ENCODE measurements at regions of chr1 and their contacts with region 1.

Region 1: GRCh38 chr1:91165033-91165654 is 143.3 kb upstream of the ZNF644 start:
- DNase-seq: peak; percentile 76
- H3K4me3 Mint-ChIP-seq: no peak overlapping the region
- H3K27ac Mint-ChIP-seq: peak overlapping the region; percentile 43
- H3K4me1 Mint-ChIP-seq: no peaks in the 10 kb centered on the region
- H3K27me3 Mint-ChIP-seq: no peaks in the 10 kb centered on the region
- CTCF ChIP-seq: peak; percentile 82

Region 2: DNA sequence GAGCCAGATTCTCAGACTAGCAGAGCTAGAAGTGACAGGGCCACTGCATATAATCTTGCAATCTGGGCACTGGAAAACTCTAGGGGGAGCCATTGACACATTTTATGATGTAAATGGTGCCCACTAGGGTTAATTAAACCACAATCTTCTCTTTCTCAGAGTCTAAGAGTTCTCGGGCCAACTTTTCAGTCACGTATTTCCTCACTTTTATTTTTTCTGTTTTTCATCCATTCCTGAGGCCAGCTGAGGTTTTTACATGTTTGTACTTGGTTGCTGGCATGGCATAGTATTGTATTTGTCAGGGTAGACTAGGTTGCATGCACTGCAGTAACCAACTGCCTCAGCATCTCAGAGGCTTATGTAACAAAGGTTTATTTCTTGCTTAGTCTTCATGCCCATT is 1032.0 kb before region 1 on chr1:
- CTCF ChIA-PET with region 1: interaction called, 28 read pairs
- POLR2A ChIA-PET with region 1: no interaction called
- intact Hi-C with region 1: loop called (anchors 1 kb)
- DNase-seq: peak; percentile 77
- H3K4me3 Mint-ChIP-seq: no peak overlapping the region
- H3K27ac Mint-ChIP-seq: no peak overlapping the region
- H3K4me1 Mint-ChIP-seq: no peaks in the 10 kb centered on the region
- H3K27me3 Mint-ChIP-seq: peaks cover 18% of the 10 kb centered on the region
- CTCF ChIP-seq: peak; percentile 74

Region 3: DNA sequence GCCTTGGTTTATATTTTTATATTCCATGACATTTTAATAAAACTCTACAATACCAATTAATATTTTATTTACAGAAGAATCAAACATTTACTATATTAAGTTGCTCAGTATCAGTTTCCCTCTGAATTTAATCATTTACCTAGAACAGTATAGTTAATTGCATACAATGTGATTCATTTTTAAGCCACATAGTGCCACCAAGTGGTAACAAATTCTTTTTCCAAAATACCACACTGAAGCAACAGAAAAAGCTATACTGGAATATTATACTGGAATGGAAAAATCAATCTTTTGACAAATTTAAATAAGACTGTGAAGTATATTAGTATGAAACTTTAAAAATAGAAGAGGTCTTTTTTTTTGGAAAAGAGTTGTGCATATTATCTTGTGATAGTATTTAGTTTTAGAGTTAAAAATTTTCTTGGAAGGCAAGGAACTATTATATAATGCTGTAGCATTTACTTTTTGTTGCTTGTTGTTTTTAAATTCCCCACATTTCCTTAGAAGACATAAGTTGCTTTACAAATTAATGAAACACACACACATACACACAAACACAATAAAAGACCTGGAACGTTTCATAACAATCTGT is 200.6 kb before region 1 on chr1:
- CTCF ChIA-PET with region 1: interaction called, 3 read pairs
- POLR2A ChIA-PET with region 1: no interaction called
- intact Hi-C with region 1: loop called (anchors 5 kb)
- DNase-seq: peak; percentile 33
- H3K4me3 Mint-ChIP-seq: no peak overlapping the region
- H3K27ac Mint-ChIP-seq: no peak overlapping the region
- H3K4me1 Mint-ChIP-seq: peaks cover 33% of the 10 kb centered on the region
- H3K27me3 Mint-ChIP-seq: no peaks in the 10 kb centered on the region
- CTCF ChIP-seq: peak; percentile 49

Region 4: DNA sequence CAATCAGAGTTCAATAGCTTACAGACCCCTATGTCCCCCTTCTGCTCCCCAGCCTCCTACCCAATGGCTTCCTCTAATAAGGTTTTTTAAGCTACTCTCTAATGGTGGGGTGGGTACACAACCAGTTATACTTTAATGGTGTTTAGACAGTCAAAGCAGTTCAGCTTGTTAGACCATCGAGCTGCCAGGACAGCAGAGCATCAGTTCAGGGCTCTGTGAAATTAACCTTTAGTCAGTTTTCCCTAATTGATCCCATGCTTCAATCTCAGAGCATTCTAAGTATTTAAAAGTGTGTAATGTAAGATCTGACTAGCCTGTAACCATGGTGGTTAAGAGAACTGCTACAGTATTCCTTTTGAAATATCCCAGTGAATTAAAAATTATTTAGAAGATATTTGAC is 36.1 kb before region 1 on chr1:
- CTCF ChIA-PET with region 1: interaction called, 11 read pairs
- POLR2A ChIA-PET with region 1: no interaction called
- intact Hi-C with region 1: no loop called
- DNase-seq: no peak
- H3K4me3 Mint-ChIP-seq: no peak overlapping the region
- H3K27ac Mint-ChIP-seq: no peak overlapping the region
- H3K4me1 Mint-ChIP-seq: no peaks in the 10 kb centered on the region
- H3K27me3 Mint-ChIP-seq: peaks cover 24% of the 10 kb centered on the region
- CTCF ChIP-seq: no peak

Region 5: DNA sequence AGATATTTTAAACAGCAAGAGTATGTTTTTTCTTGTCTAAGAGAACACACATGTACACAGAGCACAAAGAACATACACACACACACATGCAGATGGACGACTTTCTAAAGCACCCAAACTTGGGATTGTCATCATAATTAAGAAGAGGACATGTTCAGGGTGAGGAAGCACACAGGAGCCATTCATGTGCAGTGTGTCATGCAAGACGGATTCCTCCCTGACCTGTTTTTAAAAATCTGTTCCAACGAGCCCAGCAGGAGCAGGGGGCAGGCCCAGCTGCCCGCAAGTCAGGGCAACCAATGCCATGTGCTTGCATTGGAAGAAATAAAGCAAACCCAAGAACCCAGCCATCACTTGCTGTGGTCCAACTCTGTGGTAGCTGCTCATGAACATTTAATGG is 24.0 kb after region 1 on chr1:
- CTCF ChIA-PET with region 1: interaction called, 17 read pairs
- POLR2A ChIA-PET with region 1: no interaction called
- intact Hi-C with region 1: no loop called
- DNase-seq: no peak
- H3K4me3 Mint-ChIP-seq: no peak overlapping the region
- H3K27ac Mint-ChIP-seq: no peak overlapping the region
- H3K4me1 Mint-ChIP-seq: no peaks in the 10 kb centered on the region
- H3K27me3 Mint-ChIP-seq: peaks cover 33% of the 10 kb centered on the region
- CTCF ChIP-seq: no peak

Region 6: GRCh38 chr1:91273875-91274274 is 108.7 kb after region 1 on chr1:
- CTCF ChIA-PET with region 1: interaction called, 181 read pairs
- POLR2A ChIA-PET with region 1: interaction called, 5 read pairs
- intact Hi-C with region 1: loop called (anchors 1 kb)
- DNase-seq: peak; percentile 31
- H3K4me3 Mint-ChIP-seq: no peak overlapping the region
- H3K27ac Mint-ChIP-seq: no peak overlapping the region
- H3K4me1 Mint-ChIP-seq: no peaks in the 10 kb centered on the region
- H3K27me3 Mint-ChIP-seq: no peaks in the 10 kb centered on the region
- CTCF ChIP-seq: no peak

Region 7: DNA sequence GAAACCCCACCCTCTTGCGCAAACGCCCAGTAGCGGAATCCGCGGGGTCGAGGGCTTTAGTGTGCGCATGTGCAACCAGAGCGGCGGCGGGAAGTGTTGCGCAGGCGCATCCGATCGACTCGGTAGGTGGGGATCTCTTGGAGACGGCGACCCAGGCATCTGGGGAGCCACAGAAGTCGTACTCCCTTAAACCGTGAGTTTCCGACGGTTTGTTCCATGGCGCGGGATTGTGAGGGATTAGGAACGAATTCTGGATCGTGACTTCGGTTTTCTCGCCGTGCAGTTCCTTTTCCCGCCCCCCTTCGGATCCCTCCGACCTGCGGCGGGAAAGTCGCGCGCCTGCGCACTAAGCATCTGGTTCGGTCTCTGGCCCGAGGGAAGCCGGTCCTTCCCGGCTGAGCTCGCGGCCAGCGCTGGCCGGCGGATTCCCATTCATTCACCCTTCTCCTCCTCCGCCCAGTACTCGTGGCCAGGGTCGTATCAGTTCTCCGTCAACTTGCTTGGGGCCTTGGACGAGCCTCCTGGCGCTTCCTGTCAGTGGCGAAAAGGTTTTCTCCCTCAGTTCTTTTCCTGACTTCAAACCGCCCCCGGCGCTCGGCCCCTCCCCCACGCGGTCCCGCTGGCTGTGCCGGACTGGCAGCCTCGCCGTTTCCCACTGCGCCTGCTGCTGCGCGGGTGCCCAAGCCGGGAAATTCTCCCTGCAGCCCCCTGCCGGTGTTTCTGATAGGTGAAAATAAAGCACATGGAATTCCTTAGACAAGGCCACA is 335.8 kb after region 1 on chr1 and contains the start of gene CDC7:
- CTCF ChIA-PET with region 1: interaction called, 9 read pairs
- POLR2A ChIA-PET with region 1: no interaction called
- intact Hi-C with region 1: loop called (anchors 10 kb)
- DNase-seq: peak; percentile 89
- H3K4me3 Mint-ChIP-seq: no peak within 1 kb of the TSS
- H3K27ac Mint-ChIP-seq: no peak within 1 kb of the TSS
- H3K4me1 Mint-ChIP-seq: peaks cover 17% of the 10 kb centered on the region
- H3K27me3 Mint-ChIP-seq: no peaks in the 10 kb centered on the region
- CTCF ChIP-seq: peak; percentile 38
- total RNA-seq, gene CDC7: 4.0 and 8.0 TPM in 2 replicates